SK-N-SH (cell line): ENCODE measurements at regions of chr17 and their contacts with region 1.

Region 1: GRCh38 chr17:56715613-56716357 is 117.9 kb downstream of the C17orf67 start:
- DNase-seq: peak; percentile 80
- H3K4me3 ChIP-seq: no peak overlapping the region
- H3K27ac ChIP-seq: no peak overlapping the region
- H3K4me1 ChIP-seq: no peaks in the 10 kb centered on the region
- H3K27me3 ChIP-seq: no peaks in the 10 kb centered on the region; the same call in 1 of the 2 replicates
- CTCF ChIP-seq: peak; percentile 97
- EP300 ChIP-seq: no peak
- RAD21 ChIP-seq: peak; percentile 94

Region 2: GRCh38 chr17:56499799-56500388 is 215.9 kb before region 1 on chr17:
- CTCF ChIA-PET with region 1: interaction called, 18 read pairs
- POLR2A ChIA-PET with region 1: no interaction called
- DNase-seq: no peak
- H3K4me3 ChIP-seq: no peak overlapping the region; a peak in 1 of 4 replicates
- H3K27ac ChIP-seq: no peak overlapping the region
- H3K4me1 ChIP-seq: no peaks in the 10 kb centered on the region
- H3K27me3 ChIP-seq: no peaks in the 10 kb centered on the region; the same call in 1 of the 2 replicates
- CTCF ChIP-seq: peak; percentile 73
- EP300 ChIP-seq: no peak
- RAD21 ChIP-seq: peak; percentile 66

Region 3: DNA sequence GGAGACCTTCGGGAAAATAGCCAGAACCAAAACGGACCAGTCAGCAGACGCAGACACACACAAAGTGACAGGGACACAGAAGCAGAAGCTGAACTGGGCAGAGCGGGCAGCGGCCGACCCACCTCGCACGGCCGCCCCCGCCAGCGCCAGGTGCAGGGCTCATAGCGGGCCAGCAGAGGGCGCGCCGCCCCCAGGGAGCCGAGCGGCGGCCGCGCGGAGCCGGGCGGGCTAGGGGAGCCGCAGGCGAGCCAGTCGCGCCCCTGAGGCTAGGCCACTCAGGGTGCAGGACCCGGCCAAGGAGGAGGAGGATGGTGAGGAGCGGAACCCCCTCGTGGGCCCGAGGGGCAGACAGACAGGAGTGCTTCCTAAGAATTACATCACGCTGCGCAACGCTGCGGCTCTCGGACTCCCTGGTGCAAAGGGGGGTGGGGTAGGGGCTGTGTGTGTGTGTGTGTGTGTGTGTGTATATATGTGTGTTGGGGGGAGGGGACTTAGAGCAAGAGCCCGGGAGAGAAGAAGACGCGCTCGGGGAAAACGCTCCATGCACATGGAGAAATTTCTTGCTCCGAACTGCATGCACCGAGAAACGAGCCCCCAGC is 123.2 kb before region 1 on chr17:
- CTCF ChIA-PET with region 1: interaction called, 253 read pairs
- POLR2A ChIA-PET with region 1: no interaction called
- DNase-seq: peak; percentile 95
- H3K4me3 ChIP-seq: peak overlapping the region; percentile 54 to 74
- H3K27ac ChIP-seq: peak overlapping the region in 1 of 2 experiments; percentile 69; a peak in 1 of 4 replicates
- H3K4me1 ChIP-seq: peaks cover 5 to 18% of the 10 kb centered on the region in 2 experiments; a peak in 3 of 4 replicates
- H3K27me3 ChIP-seq: peaks cover 36% of the 10 kb centered on the region
- CTCF ChIP-seq: peak; percentile 98
- EP300 ChIP-seq: no peak
- RAD21 ChIP-seq: peak; percentile 81

Region 4: DNA sequence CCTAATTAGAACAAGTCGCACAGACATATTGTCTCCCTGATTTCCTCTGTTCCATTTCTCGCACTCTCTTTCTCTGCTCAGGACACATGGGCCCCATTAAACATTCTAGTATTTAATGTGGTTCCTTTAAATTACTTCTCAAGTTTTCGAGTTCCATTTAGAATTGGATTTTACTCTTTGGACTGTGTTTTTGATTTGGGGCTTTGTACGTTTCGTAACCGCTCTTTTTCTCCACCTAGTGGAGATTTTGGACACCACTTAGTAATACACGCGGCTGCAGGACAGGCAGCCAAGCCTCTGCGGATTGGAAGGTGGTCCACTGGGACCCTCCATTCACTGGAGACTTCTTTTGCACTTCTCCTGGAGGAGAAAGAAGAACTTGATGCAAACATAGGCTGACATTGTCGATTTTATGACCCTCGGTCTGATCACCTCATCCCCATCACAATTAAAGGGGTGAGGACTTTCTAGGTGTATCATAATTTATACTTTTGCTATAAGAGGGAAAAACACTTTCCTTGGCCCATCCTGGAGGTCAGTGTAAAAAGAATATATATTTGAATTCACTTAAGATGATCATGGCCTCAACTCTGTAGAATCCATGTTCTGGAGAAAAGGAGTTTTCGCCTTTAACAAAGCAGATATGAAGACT is 36.5 kb before region 1 on chr17:
- CTCF ChIA-PET with region 1: interaction called, 31 read pairs
- POLR2A ChIA-PET with region 1: no interaction called
- DNase-seq: peak; percentile 68
- H3K4me3 ChIP-seq: peak overlapping the region; percentile 27 to 42
- H3K27ac ChIP-seq: no peak overlapping the region; a peak in 1 of 4 replicates
- H3K4me1 ChIP-seq: peaks cover 8 to 28% of the 10 kb centered on the region in 2 experiments; a peak in 3 of 4 replicates
- H3K27me3 ChIP-seq: no peaks in the 10 kb centered on the region; the same call in 1 of the 2 replicates
- CTCF ChIP-seq: peak; percentile 88
- EP300 ChIP-seq: no peak
- RAD21 ChIP-seq: peak; percentile 62

Region 5: GRCh38 chr17:56727876-56728620 is 12.3 kb after region 1 on chr17:
- CTCF ChIA-PET with region 1: interaction called, 47 read pairs
- POLR2A ChIA-PET with region 1: no interaction called
- DNase-seq: no peak
- H3K4me3 ChIP-seq: no peak overlapping the region
- H3K27ac ChIP-seq: no peak overlapping the region
- H3K4me1 ChIP-seq: no peaks in the 10 kb centered on the region
- H3K27me3 ChIP-seq: peaks cover 17% of the 10 kb centered on the region; the same call in 1 of the 2 replicates
- CTCF ChIP-seq: no peak
- EP300 ChIP-seq: no peak
- RAD21 ChIP-seq: no peak

Region 6: DNA sequence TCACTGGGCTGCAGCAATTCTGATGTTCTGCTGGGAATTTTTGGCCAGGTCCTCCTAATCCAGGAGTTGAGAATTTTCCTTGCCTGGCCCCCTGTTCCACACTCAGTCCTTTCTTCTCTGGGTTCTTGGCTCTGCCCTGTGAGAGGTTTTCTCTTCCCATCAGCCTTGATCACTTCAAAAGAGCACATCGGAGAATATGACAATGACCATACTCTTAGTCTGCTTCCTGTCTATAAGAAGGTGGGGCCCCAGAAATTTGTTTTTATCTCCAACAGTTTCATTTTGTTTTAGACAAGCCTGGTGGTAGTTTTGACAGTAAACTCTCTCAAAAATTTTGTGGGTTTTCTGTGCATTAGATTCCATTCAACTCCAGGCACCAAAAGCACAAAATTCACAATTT is 47.2 kb after region 1 on chr17:
- CTCF ChIA-PET with region 1: interaction called, 19 read pairs
- POLR2A ChIA-PET with region 1: no interaction called
- DNase-seq: no peak
- H3K4me3 ChIP-seq: no peak overlapping the region
- H3K27ac ChIP-seq: no peak overlapping the region
- H3K4me1 ChIP-seq: no peaks in the 10 kb centered on the region
- H3K27me3 ChIP-seq: no peaks in the 10 kb centered on the region; the same call in 1 of the 2 replicates
- CTCF ChIP-seq: no peak
- EP300 ChIP-seq: no peak
- RAD21 ChIP-seq: no peak